AG04449 (cell line): ENCODE measurements at regions of chr2 and their contacts with region 1.

Region 1: GRCh38 chr2:65320042-65320725 is 92.6 kb downstream of the ACTR2 start:
- DNase-seq: peak; percentile 81
- H3K4me3 ChIP-seq: no peak overlapping the region
- CTCF ChIP-seq: peak; percentile 77

Region 2: GRCh38 chr2:65300761-65301711 is 19.1 kb before region 1 on chr2:
- CTCF ChIA-PET with region 1: interaction called, 15 read pairs
- POLR2A ChIA-PET with region 1: interaction called, 17 read pairs
- DNase-seq: peak; percentile 77
- H3K4me3 ChIP-seq: peak overlapping the region; percentile 39
- CTCF ChIP-seq: no peak

Region 3: GRCh38 chr2:65351234-65351947 is 31.2 kb after region 1 on chr2:
- CTCF ChIA-PET with region 1: interaction called, 11 read pairs
- POLR2A ChIA-PET with region 1: no interaction called
- DNase-seq: no peak
- H3K4me3 ChIP-seq: no peak overlapping the region
- CTCF ChIP-seq: no peak

Region 4: DNA sequence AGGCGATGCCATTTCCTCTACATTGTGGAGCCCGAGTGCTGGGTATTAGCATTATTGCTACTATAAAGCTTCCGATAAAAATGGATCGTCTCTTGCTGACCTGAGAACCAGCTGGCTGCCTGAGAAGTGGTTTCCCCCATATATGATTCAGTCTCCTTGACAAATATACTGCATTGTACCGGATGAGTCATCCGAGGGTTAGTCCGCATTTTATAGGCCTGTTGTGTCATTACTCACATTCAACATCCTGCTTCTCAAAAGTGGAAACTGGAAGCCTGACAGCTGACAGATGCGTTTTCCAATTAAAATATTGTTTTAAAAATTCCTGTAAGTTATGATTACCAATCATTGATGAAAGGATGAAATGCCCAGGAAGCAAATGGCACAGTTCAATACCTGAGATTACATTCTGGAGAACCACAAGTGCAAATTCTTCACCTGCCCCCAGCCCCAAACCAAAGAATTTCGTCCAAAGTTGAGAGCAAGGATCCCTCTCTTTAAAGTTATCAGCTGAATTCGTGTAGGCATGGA is 46.5 kb after region 1 on chr2:
- CTCF ChIA-PET with region 1: no interaction called
- POLR2A ChIA-PET with region 1: interaction called, 10 read pairs
- DNase-seq: peak; percentile 91
- H3K4me3 ChIP-seq: peak overlapping the region; percentile 49
- CTCF ChIP-seq: no peak